PC-9 (cell line): ENCODE measurements at regions of chr3 and their contacts with region 1.

Region 1: GRCh38 chr3:177050501-177051237 is 146.6 kb downstream of the TBL1XR1 start:
- DNase-seq: peak in 1 of 2 experiments; percentile 59
- H3K4me3 ChIP-seq: no peak overlapping the region
- H3K27ac ChIP-seq: peak overlapping the region; percentile 40
- H3K4me1 ChIP-seq: peaks cover 15% of the 10 kb centered on the region
- H3K27me3 ChIP-seq: no peaks in the 10 kb centered on the region
- CTCF ChIP-seq: peak; percentile 90

Region 2: DNA sequence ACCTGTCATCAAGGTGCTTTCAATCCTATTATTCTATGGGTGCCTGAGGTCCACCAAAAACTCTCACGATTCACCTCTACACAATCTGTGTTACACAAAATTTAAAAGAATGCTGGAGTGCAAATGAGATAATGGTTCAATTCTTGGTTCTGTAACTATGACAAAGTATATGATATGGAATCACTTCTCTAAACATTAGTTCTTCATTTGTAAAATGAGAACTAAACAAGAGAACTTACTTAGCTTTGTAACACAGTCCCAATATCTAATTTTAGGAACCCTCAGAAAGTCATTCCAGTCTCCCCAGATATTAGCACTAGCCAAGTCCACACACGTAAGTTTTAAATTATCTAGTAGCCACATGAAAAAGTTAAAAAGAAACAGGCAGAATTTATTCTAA is 35.1 kb after region 1 on chr3:
- CTCF ChIA-PET with region 1: no interaction called
- POLR2A ChIA-PET with region 1: no interaction called
- intact Hi-C with region 1: no loop called
- DNase-seq: no peak
- H3K4me3 ChIP-seq: no peak overlapping the region
- H3K27ac ChIP-seq: no peak overlapping the region
- H3K4me1 ChIP-seq: no peaks in the 10 kb centered on the region
- H3K27me3 ChIP-seq: no peaks in the 10 kb centered on the region
- CTCF ChIP-seq: no peak

Region 3: DNA sequence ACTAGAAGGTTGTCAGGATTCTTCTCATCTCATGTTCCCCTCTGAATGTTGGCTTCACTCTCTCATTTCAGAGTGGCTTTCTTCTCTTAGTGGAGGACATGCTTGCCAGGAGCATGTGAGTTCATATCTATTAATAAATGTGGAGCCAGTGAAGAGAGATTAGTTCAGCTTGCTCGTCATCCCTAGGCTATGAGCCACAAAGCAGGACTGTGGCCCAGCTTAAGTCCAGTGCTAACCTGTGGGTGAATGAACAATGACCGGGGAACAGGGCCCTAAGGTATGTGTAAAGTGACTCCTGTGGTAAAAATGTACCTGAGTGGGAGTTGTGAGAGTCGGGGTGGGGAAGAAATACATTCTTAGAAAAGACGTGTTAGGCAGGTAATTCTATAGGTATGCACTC is 243.6 kb after region 1 on chr3:
- CTCF ChIA-PET with region 1: no interaction called
- POLR2A ChIA-PET with region 1: interaction called, 3 read pairs
- intact Hi-C with region 1: loop called (anchors 1 kb)
- DNase-seq: peak; percentile 69 to 71
- H3K4me3 ChIP-seq: no peak overlapping the region
- H3K27ac ChIP-seq: peak overlapping the region; percentile 57; the same call in 1 of the 2 replicates
- H3K4me1 ChIP-seq: peaks cover 23% of the 10 kb centered on the region
- H3K27me3 ChIP-seq: no peaks in the 10 kb centered on the region
- CTCF ChIP-seq: no peak

Region 4: GRCh38 chr3:177378168-177378567 is 327.5 kb after region 1 on chr3:
- CTCF ChIA-PET with region 1: no interaction called
- POLR2A ChIA-PET with region 1: no interaction called
- intact Hi-C with region 1: loop called (anchors 5 kb)
- DNase-seq: no peak
- H3K4me3 ChIP-seq: no peak overlapping the region
- H3K27ac ChIP-seq: no peak overlapping the region
- H3K4me1 ChIP-seq: no peaks in the 10 kb centered on the region
- H3K27me3 ChIP-seq: no peaks in the 10 kb centered on the region
- CTCF ChIP-seq: no peak

Region 5: GRCh38 chr3:177589911-177590381 is 539.3 kb after region 1 on chr3:
- CTCF ChIA-PET with region 1: interaction called, 14 read pairs
- POLR2A ChIA-PET with region 1: no interaction called
- intact Hi-C with region 1: no loop called
- DNase-seq: peak; percentile 51 to 98
- H3K4me3 ChIP-seq: no peak overlapping the region
- H3K27ac ChIP-seq: peak overlapping the region; percentile 83
- H3K4me1 ChIP-seq: peaks cover 49% of the 10 kb centered on the region
- H3K27me3 ChIP-seq: no peaks in the 10 kb centered on the region
- CTCF ChIP-seq: no peak

Region 6: DNA sequence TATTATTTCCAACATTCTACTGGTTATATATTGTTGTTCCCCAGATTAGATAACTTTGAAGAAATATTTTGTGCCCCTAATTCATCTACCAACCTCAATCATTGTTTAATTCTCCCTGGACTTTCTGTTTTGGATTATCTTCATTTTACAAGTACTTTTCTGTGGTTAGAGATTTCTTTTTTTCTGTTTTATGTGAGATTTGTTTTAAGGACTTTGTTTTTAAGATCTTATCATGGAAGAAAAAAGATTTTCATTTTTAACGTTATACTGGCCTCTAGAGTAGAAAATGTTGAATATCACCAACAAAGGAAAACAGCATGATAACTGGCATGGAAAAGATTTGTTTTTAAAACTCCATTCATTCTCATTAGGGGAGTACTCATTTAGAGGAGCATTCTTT is 1274.7 kb after region 1 on chr3:
- CTCF ChIA-PET with region 1: no interaction called
- POLR2A ChIA-PET with region 1: no interaction called
- intact Hi-C with region 1: loop called (anchors 2 kb)
- DNase-seq: no peak
- H3K4me3 ChIP-seq: no peak overlapping the region
- H3K27ac ChIP-seq: no peak overlapping the region
- H3K4me1 ChIP-seq: peaks cover 13% of the 10 kb centered on the region
- H3K27me3 ChIP-seq: no peaks in the 10 kb centered on the region
- CTCF ChIP-seq: peak; percentile 72